Naive thymus-derived CD4-positive, alpha-beta T cell (primary cell): ENCODE measurements at regions of chr9 and their contacts with region 1.

Region 1: DNA sequence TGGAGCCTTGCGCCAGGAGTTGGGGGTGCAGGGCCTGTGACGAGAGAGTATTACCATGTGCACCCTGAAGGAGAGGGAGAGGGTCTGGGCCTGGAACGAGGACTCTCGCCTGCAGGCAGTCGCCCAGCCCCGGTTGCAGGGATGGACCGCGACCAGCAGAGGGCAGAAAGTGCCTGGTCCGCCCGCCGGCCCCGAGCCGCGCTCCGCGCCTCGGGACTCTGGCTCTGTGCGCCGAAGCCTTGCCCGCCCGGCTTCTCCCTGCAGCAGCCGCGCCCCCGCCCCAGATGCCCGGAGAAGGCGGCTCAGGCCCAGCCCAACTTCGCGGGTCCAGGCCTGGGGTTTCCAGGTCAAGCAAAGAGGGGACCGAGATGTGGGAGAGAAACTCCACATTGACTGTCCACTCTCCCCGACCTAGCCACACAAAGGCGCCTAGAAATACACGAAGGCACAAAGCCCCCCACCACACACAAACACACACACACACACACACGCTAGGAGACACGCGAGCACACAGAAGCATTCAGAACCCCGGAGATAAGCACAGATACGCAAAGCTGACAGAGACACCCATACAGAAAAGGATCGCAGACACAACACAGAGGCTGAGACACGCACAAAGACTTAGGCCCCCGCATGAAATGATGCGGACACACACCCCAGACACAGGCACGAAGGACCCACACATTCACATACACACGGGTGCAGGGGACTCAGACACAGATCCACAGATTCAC is 2.0 kb upstream of the LMX1B start:
- DNase-seq: peak; percentile 19 to 76 (median 55)
- ATAC-seq: peak; percentile 87
- H3K4me3 ChIP-seq: peak overlapping the region; percentile 18
- H3K4me3 Mint-ChIP-seq: peak overlapping the region; percentile 2 to 88 (median 80)
- H3K27ac ChIP-seq: no peak overlapping the region
- H3K27ac Mint-ChIP-seq: peak overlapping the region in 1 of 9 donors; percentile 52
- H3K4me1 ChIP-seq: peaks cover 6 to 7% of the 10 kb centered on the region in 2 donors
- H3K4me1 Mint-ChIP-seq: peaks cover 11 to 25% (median 16%) of the 10 kb centered on the region in 7 donors
- H3K27me3 ChIP-seq: peaks cover 10 to 12% of the 10 kb centered on the region in 2 donors
- H3K27me3 Mint-ChIP-seq: peaks cover 43 to 79% (median 66%) of the 10 kb centered on the region in 5 donors

Region 2: DNA sequence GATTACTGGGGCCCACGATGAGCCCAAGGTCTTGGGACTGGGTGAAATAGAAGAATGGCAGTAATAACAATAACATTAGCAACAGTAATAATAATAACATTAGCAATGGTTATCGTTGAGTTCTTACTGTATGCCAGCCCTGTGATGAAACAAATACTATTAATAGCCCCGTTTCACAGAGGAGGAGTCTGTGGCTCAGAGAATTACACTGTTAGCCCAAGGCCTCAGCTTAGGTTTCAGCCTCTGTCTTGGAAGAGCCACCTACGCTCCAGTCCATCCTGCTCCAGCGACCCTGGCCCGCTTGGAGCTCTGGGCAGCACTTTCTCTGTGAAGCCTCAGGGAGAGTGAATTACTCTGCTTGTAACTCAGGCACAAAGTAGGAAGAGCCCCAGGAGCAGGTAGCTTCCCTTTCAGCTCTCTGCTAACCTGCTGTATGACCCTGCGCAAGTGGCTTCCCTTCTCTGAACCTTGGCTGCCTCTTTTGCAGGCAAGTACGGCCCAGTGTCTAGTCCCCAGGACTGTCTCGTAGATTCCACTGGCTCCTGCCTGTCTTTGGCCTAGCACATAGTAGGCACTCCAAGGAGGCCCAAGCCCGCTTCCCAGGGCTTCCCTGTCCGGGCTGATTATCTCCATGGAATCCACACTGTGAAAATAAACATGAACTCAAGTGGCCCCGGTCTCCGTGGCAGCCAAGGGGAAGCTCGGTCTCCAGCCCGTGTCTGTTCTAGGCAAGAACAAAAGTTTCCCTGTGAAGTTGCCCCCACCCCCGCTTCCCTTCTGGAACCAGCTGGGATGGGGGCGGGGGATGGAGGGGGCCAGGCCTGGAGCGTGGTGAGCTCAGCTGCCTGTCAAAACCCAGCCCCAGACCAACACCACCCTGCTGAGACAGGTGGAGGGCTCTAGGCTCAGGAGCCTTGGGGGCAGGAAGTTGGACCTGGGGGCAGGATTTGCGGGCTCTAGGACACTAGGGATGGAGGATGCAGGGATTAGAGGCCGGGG is 24.3 kb before region 1 on chr9:
- CTCF ChIA-PET with region 1: no interaction called
- POLR2A ChIA-PET with region 1: no interaction called
- intact Hi-C with region 1: no loop called
- DNase-seq: no peak
- ATAC-seq: no peak
- H3K4me3 ChIP-seq: no peak overlapping the region
- H3K4me3 Mint-ChIP-seq: no peak overlapping the region
- H3K27ac ChIP-seq: no peak overlapping the region
- H3K27ac Mint-ChIP-seq: no peak overlapping the region
- H3K4me1 ChIP-seq: no peaks in the 10 kb centered on the region
- H3K4me1 Mint-ChIP-seq: peaks cover 0 to 1% (median 0%) of the 10 kb centered on the region in 7 donors
- H3K27me3 ChIP-seq: no peaks in the 10 kb centered on the region
- H3K27me3 Mint-ChIP-seq: peaks cover 15 to 76% (median 41%) of the 10 kb centered on the region in 5 donors

Region 3: GRCh38 chr9:126626127-126626925 is 14.6 kb after region 1 on chr9:
- CTCF ChIA-PET with region 1: no interaction called
- POLR2A ChIA-PET with region 1: no interaction called
- intact Hi-C with region 1: loop called in 1 of 2 experiments (anchors 2 kb)
- DNase-seq: no peak
- ATAC-seq: no peak
- H3K4me3 ChIP-seq: peak overlapping the region; percentile 35
- H3K4me3 Mint-ChIP-seq: peak overlapping the region in 9 of 10 donors; percentile 51 to 89 (median 76)
- H3K27ac ChIP-seq: no peak overlapping the region
- H3K27ac Mint-ChIP-seq: peak overlapping the region in 1 of 9 donors; percentile 42
- H3K4me1 ChIP-seq: peaks cover 0 to 6% of the 10 kb centered on the region in 2 donors
- H3K4me1 Mint-ChIP-seq: peaks cover 0 to 16% (median 6%) of the 10 kb centered on the region in 7 donors
- H3K27me3 ChIP-seq: peaks cover 6 to 22% of the 10 kb centered on the region in 2 donors
- H3K27me3 Mint-ChIP-seq: peaks cover 62 to 90% (median 75%) of the 10 kb centered on the region in 5 donors

Region 4: DNA sequence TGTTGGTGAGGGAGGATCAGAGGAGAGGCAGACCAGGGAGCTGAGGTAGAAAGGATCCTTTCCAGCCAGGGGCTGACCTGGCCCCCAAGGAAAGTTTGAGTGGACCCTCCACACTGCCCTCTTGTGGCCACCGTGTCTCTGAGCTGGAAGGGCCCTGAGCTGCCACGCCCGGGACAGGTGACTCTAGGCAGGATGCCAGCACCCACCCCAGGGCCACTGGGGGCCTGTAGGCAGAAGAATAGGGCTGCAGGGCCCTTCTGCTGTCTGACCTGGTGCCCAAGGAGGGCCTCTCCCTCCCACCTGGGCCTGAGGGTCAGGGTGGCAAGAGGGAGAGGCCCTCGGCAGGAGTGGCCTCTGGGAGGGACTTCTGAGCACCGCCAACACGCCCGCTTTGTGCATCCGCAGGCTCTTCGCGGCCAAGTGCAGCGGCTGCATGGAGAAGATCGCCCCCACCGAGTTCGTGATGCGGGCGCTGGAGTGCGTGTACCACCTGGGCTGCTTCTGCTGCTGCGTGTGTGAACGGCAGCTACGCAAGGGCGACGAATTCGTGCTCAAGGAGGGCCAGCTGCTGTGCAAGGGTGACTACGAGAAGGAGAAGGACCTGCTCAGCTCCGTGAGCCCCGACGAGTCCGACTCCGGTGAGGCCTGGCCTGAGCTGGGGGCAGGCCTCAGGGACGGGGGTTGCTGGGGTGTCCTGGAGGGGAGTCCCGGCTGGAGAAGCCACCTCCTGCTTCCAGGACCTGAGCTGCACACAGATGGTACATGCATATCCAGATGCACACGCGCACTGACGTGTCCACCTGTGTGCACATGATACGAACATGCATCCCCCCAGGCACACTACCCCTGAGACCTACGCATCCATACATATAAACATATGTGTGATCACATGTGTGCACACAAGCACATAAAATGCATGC is 78.9 kb after region 1 on chr9:
- CTCF ChIA-PET with region 1: no interaction called
- POLR2A ChIA-PET with region 1: no interaction called
- intact Hi-C with region 1: loop called in 1 of 2 experiments (anchors 2 kb)
- DNase-seq: peak in 6 of 9 donors; percentile 32 to 53 (median 35)
- ATAC-seq: peak; percentile 71
- H3K4me3 ChIP-seq: no peak overlapping the region
- H3K4me3 Mint-ChIP-seq: no peak overlapping the region
- H3K27ac ChIP-seq: no peak overlapping the region
- H3K27ac Mint-ChIP-seq: no peak overlapping the region
- H3K4me1 ChIP-seq: no peaks in the 10 kb centered on the region
- H3K4me1 Mint-ChIP-seq: no peaks in the 10 kb centered on the region
- H3K27me3 ChIP-seq: no peaks in the 10 kb centered on the region
- H3K27me3 Mint-ChIP-seq: peaks cover 24 to 36% (median 29%) of the 10 kb centered on the region in 5 donors

Region 5: GRCh38 chr9:126704873-126705766 is 93.4 kb after region 1 on chr9:
- CTCF ChIA-PET with region 1: no interaction called
- POLR2A ChIA-PET with region 1: no interaction called
- intact Hi-C with region 1: loop called in 1 of 2 experiments (anchors 1 kb)
- DNase-seq: peak; percentile 67 to 89 (median 83)
- ATAC-seq: peak; percentile 90
- H3K4me3 ChIP-seq: peak overlapping the region; percentile 38
- H3K4me3 Mint-ChIP-seq: peak overlapping the region; percentile 45 to 79 (median 72)
- H3K27ac ChIP-seq: no peak overlapping the region
- H3K27ac Mint-ChIP-seq: peak overlapping the region in 3 of 9 donors; percentile 30 to 64 (median 43)
- H3K4me1 ChIP-seq: peaks cover 3 to 10% of the 10 kb centered on the region in 2 donors
- H3K4me1 Mint-ChIP-seq: peaks cover 10 to 23% (median 22%) of the 10 kb centered on the region in 7 donors
- H3K27me3 ChIP-seq: no peaks in the 10 kb centered on the region
- H3K27me3 Mint-ChIP-seq: peaks cover 13 to 35% (median 26%) of the 10 kb centered on the region in 5 donors

Region 6: GRCh38 chr9:126781186-126782052 is 169.7 kb after region 1 on chr9:
- CTCF ChIA-PET with region 1: no interaction called
- POLR2A ChIA-PET with region 1: no interaction called
- intact Hi-C with region 1: loop called in 1 of 2 experiments (anchors 5 kb)
- DNase-seq: peak; percentile 55 to 87 (median 74)
- ATAC-seq: peak; percentile 95
- H3K4me3 ChIP-seq: no peak overlapping the region
- H3K4me3 Mint-ChIP-seq: no peak overlapping the region
- H3K27ac ChIP-seq: no peak overlapping the region
- H3K27ac Mint-ChIP-seq: peak overlapping the region in 1 of 9 donors; percentile 55
- H3K4me1 ChIP-seq: no peaks in the 10 kb centered on the region
- H3K4me1 Mint-ChIP-seq: peaks cover 0 to 4% (median 0%) of the 10 kb centered on the region in 7 donors
- H3K27me3 ChIP-seq: no peaks in the 10 kb centered on the region
- H3K27me3 Mint-ChIP-seq: peaks cover 2 to 27% (median 12%) of the 10 kb centered on the region in 5 donors